Activated naive CD4-positive, alpha-beta T cell treated with anti-CD3 and anti-CD28 coated beads, Interleukin-2, amount 10 ng/mL, durations not matched to agents 7 days and 5 days (primary cell): ENCODE measurements at regions of chr5 and their contacts with region 1.

Region 1: GRCh38 chr5:33936004-33936380 is 194 bp upstream of the RXFP3 start:
- DNase-seq: peak; percentile 68
- H3K4me3 Mint-ChIP-seq: no peak overlapping the region
- H3K27ac Mint-ChIP-seq: no peak overlapping the region
- H3K4me1 Mint-ChIP-seq: peaks cover 3% of the 10 kb centered on the region
- H3K27me3 Mint-ChIP-seq: peaks cover 59% of the 10 kb centered on the region

Region 2: DNA sequence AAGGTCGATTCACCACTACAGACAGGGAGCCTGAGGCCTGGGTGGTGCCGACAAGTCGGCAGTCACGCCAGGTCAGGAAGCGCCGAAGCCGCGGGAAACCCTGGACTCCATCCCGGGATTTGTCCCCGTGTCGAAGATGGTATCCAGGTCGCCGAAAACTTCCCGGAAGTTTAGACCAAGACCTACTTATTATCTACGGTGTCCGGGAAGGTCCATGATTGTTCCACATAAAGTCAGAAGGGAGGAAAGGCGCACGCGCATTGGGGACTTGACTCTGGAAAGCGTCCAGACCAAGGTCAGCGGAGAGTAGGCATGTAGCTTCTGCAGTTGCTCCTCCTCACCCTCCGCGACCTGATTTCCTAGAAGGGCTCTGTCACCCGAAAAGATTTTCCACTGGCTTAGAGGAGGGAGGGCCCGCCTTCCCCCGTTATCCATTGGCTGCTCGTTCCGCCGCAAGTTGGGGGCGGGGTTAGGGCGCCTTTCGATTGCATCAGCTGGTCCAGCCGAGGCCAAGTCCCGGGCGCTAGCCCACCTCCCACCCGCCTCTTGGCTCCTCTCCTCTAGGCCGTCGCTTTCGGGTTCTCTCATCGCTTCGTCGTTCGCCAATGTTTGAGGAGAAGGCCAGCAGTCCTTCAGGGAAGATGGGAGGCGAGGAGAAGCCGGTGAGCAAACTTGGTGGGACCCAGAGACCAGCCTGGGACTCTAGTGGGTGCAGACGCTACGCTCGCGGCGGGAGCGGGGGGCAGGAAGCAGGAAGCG is 495.3 kb before region 1 on chr5 and contains the start of gene TARS1:
- CTCF ChIA-PET with region 1: interaction called, 13 read pairs
- DNase-seq: peak; percentile 96
- H3K4me3 Mint-ChIP-seq: no peak within 1 kb of the TSS
- H3K27ac Mint-ChIP-seq: no peak within 1 kb of the TSS
- H3K4me1 Mint-ChIP-seq: peaks cover 32% of the 10 kb centered on the region
- H3K27me3 Mint-ChIP-seq: no peaks in the 10 kb centered on the region

Region 3: DNA sequence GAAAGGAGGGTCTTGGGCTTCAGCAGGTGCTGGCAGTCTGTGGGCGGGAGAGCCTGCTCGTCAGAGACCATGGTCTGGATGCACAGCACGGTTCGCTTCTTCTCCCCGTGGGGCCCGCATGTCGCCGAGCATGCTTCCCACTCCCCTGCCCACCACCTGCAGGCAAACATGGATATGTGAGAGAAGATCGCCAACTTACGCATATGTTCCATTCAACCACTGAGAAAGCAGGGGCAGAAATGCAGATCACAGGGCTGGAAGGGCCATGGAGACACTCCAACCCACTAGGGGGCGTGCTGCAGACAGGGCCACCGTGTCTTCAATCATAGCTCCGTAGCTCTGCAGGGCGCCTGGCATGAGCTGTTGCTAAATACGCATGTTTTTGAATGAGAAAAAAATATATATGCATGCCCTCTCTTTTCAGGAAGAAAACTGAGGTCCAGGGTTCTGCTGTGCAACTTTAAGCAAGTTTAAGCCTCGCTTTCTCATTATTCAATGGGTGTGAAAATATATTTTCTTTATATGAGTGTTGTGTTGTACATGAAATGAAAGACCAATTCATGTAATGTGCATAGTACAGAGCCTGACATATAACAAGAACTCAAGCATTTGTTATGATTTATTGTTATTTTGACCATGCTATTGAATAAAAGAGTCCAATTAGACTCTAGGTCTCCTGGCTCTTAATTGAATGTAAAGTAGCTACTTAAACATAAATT is 347.2 kb before region 1 on chr5:
- CTCF ChIA-PET with region 1: interaction called, 33 read pairs
- DNase-seq: peak; percentile 68
- H3K4me3 Mint-ChIP-seq: no peak overlapping the region
- H3K27ac Mint-ChIP-seq: no peak overlapping the region
- H3K4me1 Mint-ChIP-seq: no peaks in the 10 kb centered on the region
- H3K27me3 Mint-ChIP-seq: peaks cover 4% of the 10 kb centered on the region

Region 4: GRCh38 chr5:33850100-33850594 is 85.8 kb before region 1 on chr5:
- CTCF ChIA-PET with region 1: no interaction called
- DNase-seq: peak; percentile 57
- H3K4me3 Mint-ChIP-seq: no peak overlapping the region
- H3K27ac Mint-ChIP-seq: no peak overlapping the region
- H3K4me1 Mint-ChIP-seq: peaks cover 10% of the 10 kb centered on the region
- H3K27me3 Mint-ChIP-seq: peaks cover 8% of the 10 kb centered on the region

Region 5: GRCh38 chr5:33964132-33964700 is 28.2 kb after region 1 on chr5:
- CTCF ChIA-PET with region 1: interaction called, 17 read pairs
- DNase-seq: no peak
- H3K4me3 Mint-ChIP-seq: no peak overlapping the region
- H3K27ac Mint-ChIP-seq: no peak overlapping the region
- H3K4me1 Mint-ChIP-seq: peaks cover 14% of the 10 kb centered on the region
- H3K27me3 Mint-ChIP-seq: no peaks in the 10 kb centered on the region

Region 6: DNA sequence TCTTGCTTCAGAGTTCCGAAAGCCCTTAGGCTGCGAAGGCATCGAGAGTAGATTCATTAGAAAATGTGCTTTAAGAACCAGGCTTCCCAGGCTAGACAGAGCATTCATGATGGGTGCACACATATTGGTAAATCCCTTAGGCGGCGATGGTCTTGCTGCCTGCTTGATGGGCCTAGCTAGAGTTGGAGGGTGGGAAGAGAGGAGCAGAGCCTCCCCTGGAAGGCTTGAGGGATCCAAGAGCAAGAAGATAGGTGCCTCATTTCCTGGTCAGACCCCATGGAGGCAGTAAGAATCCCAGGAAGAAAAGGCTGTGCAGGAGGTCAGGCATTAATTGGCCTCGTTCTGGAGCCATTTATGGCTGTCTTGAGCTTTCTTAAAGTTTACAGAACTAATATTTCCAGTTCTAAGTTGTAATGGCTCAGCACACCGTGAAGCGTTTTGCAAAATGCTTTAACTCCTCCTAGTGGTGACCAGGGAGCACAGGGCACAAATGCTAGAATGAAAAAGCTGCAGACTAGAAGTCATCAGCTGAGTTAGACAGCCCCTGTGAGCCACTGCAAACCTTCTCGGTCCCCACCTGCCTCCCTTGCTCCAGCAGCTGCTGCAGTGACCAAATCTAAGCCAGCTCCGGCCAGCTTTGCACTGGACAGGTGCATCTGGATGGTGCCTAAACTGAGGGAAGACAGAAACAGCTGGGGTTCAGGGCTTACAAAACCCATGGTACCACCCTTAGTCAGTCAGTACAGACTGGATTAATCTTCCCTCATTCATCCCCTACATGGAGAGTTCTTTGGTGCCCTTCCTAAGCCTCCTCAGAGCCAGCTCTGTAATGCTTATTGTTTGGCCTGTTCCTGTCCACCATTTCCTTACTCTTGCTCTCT is 33.8 kb after region 1 on chr5:
- CTCF ChIA-PET with region 1: interaction called, 17 read pairs
- DNase-seq: peak; percentile 26
- H3K4me3 Mint-ChIP-seq: no peak overlapping the region
- H3K27ac Mint-ChIP-seq: no peak overlapping the region
- H3K4me1 Mint-ChIP-seq: peaks cover 34% of the 10 kb centered on the region
- H3K27me3 Mint-ChIP-seq: no peaks in the 10 kb centered on the region